ENCODE measurements at regions of chr1 and their contacts with region 1.

Region 1: DNA sequence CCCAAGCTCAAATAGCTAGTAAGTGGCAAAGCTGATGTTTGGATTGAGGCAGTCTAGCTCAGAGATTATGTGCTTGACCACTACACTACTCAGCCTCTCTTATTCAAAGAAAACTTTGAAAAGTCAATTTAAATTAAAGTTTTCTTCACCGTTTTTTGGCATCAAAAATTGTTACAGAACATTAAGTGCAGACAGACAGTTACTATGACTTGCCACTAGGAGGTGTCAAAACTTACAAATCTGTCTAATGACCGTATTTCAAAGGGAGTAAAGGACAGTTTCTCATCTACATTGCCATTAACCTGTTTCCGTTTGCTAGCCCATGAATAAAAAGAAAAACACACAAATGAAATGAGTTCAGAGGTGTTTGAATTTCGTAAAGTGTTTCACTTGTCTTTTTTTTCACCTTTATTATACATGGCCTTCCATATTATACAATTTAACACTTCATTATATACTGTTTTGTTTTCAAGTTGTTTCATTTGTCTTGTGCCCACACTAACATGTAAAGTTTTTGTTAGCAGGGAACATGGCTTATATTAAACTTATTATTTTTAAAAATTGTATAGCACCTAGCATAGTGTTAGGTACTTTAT is 57.4 kb upstream of the MTF2 start:
- DNase-seq: peak in 3 of 35 experiments; percentile 7 to 69 (median 24)
- ATAC-seq: peak; percentile 55 to 77 (median 68)
- H3K4me3 ChIP-seq: no peak overlapping the region
- H3K4me3 Mint-ChIP-seq: no peak overlapping the region
- H3K27ac ChIP-seq: no peak overlapping the region
- H3K27ac Mint-ChIP-seq: no peak overlapping the region
- H3K4me1 ChIP-seq: no peaks in the 10 kb centered on the region
- H3K4me1 Mint-ChIP-seq: peaks cover 0 to 5% (median 0%) of the 10 kb centered on the region in 3 donors
- H3K27me3 ChIP-seq: no peaks in the 10 kb centered on the region
- H3K27me3 Mint-ChIP-seq: peaks cover 0 to 10% of the 10 kb centered on the region in 2 donors

Region 2: DNA sequence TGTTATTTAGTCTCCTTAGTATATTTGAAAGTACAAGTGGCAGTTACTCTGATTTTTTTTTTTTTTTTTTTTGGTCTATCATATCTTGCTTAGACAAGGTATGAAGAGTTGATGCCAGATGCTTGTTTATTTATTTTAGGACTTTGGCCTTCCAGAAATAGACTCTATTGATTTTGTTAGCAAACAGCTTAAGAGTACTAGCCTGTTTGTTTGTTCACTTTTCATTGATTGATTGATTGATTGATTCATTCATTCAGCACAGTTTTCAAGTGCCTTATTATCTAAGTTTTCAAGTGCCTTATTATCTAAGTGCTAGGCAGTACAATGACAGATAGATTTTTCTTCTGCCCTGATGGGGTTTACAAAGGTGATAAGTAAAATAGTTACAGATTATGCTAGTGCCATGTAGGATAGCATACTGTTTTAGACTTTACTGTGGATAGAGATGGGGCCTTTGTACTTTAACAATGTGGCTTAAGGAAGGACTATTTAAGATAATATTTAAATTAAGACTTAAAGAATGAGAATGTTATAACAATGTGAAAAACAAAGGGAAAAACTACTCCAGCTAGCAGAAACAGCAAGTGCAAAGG is 108.0 kb after region 1 on chr1:
- CTCF ChIA-PET with region 1: no interaction called
- POLR2A ChIA-PET with region 1: interaction called in 1 of 2 experiments, 15 read pairs
- DNase-seq: no peak
- ATAC-seq: no peak
- H3K4me3 ChIP-seq: no peak overlapping the region
- H3K4me3 Mint-ChIP-seq: no peak overlapping the region
- H3K27ac ChIP-seq: no peak overlapping the region
- H3K27ac Mint-ChIP-seq: no peak overlapping the region
- H3K4me1 ChIP-seq: no peaks in the 10 kb centered on the region
- H3K4me1 Mint-ChIP-seq: peaks cover 0 to 2% (median 0%) of the 10 kb centered on the region in 3 donors
- H3K27me3 ChIP-seq: no peaks in the 10 kb centered on the region
- H3K27me3 Mint-ChIP-seq: no peaks in the 10 kb centered on the region

Measured in T-cell (primary cell).